Posterior vena cava (tissue), 2 donors: ENCODE measurements at regions of chr17 and their contacts with region 1.

Region 1: GRCh38 chr17:15490634-15491261 is 23.3 kb upstream of the CDRT4 start:
- DNase-seq: peak; percentile 92

Region 2: DNA sequence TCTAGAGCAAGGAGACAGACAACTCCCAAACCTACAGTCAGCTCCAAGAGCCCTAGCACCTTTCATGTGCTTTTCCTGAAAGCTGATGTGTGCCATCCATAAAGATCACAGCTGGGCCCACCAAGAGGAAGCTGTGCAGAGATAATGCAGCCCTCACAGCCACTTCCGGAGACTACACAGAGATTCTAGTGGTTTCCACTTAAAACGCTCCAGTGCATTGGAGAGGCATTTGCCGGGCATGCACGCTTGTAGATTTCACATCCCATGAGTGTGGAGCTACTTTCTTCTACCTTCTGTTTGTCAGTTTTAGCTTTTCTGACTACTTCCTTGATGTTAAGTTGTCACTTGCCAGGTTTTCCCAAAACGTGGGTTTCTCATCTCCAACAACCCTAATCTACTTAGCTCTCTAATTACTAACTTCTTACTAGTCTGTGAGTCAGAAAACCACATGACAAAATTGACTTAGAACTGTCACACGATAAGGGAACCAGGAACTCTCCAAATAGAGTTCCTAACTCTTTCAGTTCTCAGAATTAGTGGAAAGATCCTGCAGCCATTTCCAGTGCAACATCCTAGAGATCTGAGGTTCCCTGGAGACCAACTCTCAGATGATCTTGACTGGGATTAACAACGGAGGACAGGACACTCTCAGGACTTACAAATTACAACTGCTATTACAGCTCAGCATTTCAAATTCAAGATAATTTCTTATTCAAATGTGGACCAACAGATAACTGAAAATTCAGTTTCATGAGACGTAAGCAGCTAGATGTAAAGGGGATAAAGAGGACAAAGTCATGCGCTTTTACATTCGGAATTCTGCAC is 254.3 kb before region 1 on chr17:
- intact Hi-C with region 1: loop called in 1 of 2 experiments (anchors 1 kb)
- DNase-seq: no peak